ENCODE measurements at regions of chr1 and their contacts with region 1.

Region 1: DNA sequence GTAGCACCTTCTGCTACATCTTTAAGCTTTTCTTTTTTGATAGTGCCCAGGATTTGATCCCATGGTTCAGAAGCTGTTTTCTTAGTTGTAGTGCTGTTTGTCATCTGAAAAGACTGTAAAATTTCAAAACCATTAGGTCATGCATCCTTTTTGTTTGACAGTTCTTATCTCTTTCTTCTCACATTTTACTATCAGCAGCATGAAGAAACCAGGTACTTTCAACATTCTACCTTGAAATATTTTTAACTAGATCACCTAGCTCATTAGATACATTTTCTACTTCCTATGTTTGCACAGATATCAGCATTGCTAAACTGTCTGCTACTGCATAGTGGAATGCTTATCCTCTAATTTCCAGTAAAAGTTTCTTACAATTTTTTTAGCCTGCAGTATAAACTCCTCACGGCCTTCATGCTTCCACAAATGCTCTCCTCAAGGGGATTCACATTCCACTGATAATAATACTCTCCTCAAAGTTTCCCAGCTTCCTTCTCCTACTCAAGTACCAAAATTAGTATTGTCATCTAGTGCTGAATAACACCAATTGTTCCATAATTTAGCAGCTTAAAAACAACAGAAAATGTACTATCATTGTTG is 243.9 kb upstream of the ZRANB2 start:
- DNase-seq: no peak
- ATAC-seq: peak; percentile 40; the same call in 1 of the 2 replicates
- H3K4me3 ChIP-seq: no peak overlapping the region
- H3K27ac ChIP-seq: no peak overlapping the region
- H3K4me1 ChIP-seq: no peaks in the 10 kb centered on the region
- H3K27me3 ChIP-seq: no peaks in the 10 kb centered on the region
- CTCF ChIP-seq: no peak
- POLR2A ChIP-seq: no peak
- RAD21 ChIP-seq: no peak

Region 2: DNA sequence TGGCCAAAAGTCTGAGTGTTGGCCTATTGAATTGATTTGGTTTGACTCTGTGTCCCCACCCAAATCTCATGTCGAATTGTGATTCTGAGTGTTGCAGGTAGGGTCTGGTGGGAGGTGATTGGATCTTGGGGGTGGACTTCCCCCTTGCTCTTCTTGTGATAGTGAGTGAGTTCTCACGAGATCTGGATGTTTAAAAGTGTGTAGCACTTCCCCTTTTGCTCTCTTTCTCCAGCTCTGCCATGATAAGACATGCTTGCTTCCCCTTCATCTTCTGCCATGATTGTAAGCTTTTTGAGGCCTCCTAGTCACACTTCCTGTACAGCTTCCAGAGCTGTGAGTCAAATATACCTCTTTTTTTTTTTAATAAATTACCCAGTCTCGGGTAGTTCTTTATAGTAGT is 53.1 kb after region 1 on chr1:
- CTCF ChIA-PET with region 1: no interaction called
- POLR2A ChIA-PET with region 1: no interaction called
- dilution Hi-C with region 1: no loop called
- in situ Hi-C with region 1: no loop called
- intact Hi-C with region 1: loop called (anchors 2 kb)
- DNase-seq: no peak
- ATAC-seq: no peak
- H3K4me3 ChIP-seq: no peak overlapping the region
- H3K27ac ChIP-seq: no peak overlapping the region
- H3K4me1 ChIP-seq: no peaks in the 10 kb centered on the region
- H3K27me3 ChIP-seq: no peaks in the 10 kb centered on the region
- CTCF ChIP-seq: no peak
- POLR2A ChIP-seq: no peak
- RAD21 ChIP-seq: no peak

Region 3: GRCh38 chr1:71428029-71428428 is 103.3 kb after region 1 on chr1:
- CTCF ChIA-PET with region 1: no interaction called
- POLR2A ChIA-PET with region 1: no interaction called
- dilution Hi-C with region 1: no loop called
- in situ Hi-C with region 1: no loop called
- intact Hi-C with region 1: no loop called
- DNase-seq: no peak
- ATAC-seq: no peak
- H3K4me3 ChIP-seq: no peak overlapping the region
- H3K27ac ChIP-seq: no peak overlapping the region
- H3K4me1 ChIP-seq: no peaks in the 10 kb centered on the region
- H3K27me3 ChIP-seq: no peaks in the 10 kb centered on the region
- CTCF ChIP-seq: no peak
- POLR2A ChIP-seq: no peak
- RAD21 ChIP-seq: no peak

Measured in IMR-90 (cell line).